Activated CD4-positive, alpha-beta T cell treated with anti-CD3 and anti-CD28 coated beads for 36 hours (primary cell): ENCODE measurements at regions of chr5 and their contacts with region 1.

Region 1: GRCh38 chr5:16784843-16785791 is 151.0 kb downstream of the MYO10 start:
- DNase-seq: peak; percentile 79
- ATAC-seq: peak; percentile 98
- H3K4me3 Mint-ChIP-seq: peak overlapping the region; percentile 31
- H3K27ac Mint-ChIP-seq: peak overlapping the region; percentile 45
- H3K4me1 Mint-ChIP-seq: peaks cover 24% of the 10 kb centered on the region
- H3K27me3 Mint-ChIP-seq: peaks cover 16% of the 10 kb centered on the region

Region 2: DNA sequence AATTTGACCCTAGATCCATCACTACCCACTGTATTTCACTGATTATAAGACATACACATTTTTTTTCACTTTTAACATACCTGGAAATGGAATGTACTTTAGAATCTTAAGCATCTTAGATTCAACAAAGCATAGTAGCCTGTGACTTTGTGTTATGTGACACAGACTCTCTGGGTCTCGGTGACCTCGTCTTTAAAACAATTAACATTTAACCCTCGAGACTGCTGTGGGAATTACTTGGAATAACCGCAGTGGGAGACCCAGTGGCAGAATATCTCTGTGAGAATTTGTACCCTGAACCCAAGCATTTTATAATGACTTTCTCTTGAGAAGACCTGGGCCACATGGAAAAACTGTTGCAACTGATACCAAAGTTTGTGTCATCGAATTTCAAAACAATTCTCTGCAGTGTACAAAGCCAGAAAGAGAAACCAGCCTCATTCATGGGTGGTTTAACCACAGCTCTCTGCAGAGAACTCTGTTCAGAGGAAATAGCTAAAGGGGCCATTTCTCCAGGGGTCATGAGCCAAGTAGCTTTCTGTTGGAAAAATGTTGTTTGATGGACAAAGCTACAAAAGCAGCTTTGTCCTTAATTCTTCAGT is 158.4 kb before region 1 on chr5:
- CTCF ChIA-PET with region 1: no interaction called
- POLR2A ChIA-PET with region 1: no interaction called
- intact Hi-C with region 1: loop called (anchors 1 to 10 kb)
- DNase-seq: peak; percentile 55
- ATAC-seq: peak; percentile 87
- H3K4me3 Mint-ChIP-seq: peak overlapping the region; percentile 9
- H3K27ac Mint-ChIP-seq: peak overlapping the region; percentile 85
- H3K4me1 Mint-ChIP-seq: peaks cover 53% of the 10 kb centered on the region
- H3K27me3 Mint-ChIP-seq: no peaks in the 10 kb centered on the region

Region 3: GRCh38 chr5:16690243-16690852 is 94.8 kb before region 1 on chr5:
- CTCF ChIA-PET with region 1: no interaction called
- POLR2A ChIA-PET with region 1: no interaction called
- intact Hi-C with region 1: loop called in 1 of 2 experiments (anchors 5 kb)
- DNase-seq: peak; percentile 51
- ATAC-seq: peak; percentile 80
- H3K4me3 Mint-ChIP-seq: no peak overlapping the region
- H3K27ac Mint-ChIP-seq: no peak overlapping the region
- H3K4me1 Mint-ChIP-seq: peaks cover 4% of the 10 kb centered on the region
- H3K27me3 Mint-ChIP-seq: peaks cover 4% of the 10 kb centered on the region

Region 4: DNA sequence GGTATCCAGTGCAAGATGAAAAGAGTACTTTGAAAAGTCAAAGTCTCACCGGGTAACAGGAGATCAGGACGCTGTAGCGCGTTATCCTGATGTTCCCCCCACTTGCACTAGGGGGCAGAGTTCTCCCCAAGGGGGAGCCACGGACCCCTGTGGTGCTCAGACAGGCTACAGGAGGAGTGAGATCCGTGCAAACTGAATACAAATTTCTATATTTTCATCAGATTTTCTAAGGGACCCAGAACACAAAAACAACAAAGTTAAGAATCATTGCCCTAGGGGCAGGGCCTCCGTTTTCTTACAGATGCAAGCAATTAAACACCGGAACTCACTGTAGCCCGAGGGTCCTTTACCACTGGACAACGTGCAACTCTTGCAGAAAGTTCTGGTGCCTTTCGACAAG is 149.0 kb after region 1 on chr5:
- CTCF ChIA-PET with region 1: no interaction called
- POLR2A ChIA-PET with region 1: no interaction called
- intact Hi-C with region 1: loop called (anchors 2 to 10 kb)
- DNase-seq: peak; percentile 71
- ATAC-seq: peak; percentile 51
- H3K4me3 Mint-ChIP-seq: no peak overlapping the region
- H3K27ac Mint-ChIP-seq: no peak overlapping the region
- H3K4me1 Mint-ChIP-seq: peaks cover 22% of the 10 kb centered on the region
- H3K27me3 Mint-ChIP-seq: peaks cover 69% of the 10 kb centered on the region